Activated T-helper 1 cell treated with anti-CD3 and anti-CD28 coated beads, Interleukin-12 subunit alpha, Interleukin-12 subunit beta, Interleukin-2, Interleukin-4 antibody, amounts not matched to agents 30 ng/mL and 10 ng/mL and 1 ng/mL, durations not matched to agents 14 hours and 24 hours and 36 hours (primary cell): ENCODE measurements at regions of chr13 and their contacts with region 1.

Region 1: GRCh38 chr13:91785431-91786119 is 387.2 kb downstream of the GPC5 start:
- DNase-seq: no peak
- H3K4me3 Mint-ChIP-seq: no peak overlapping the region
- H3K27ac Mint-ChIP-seq: no peak overlapping the region
- H3K4me1 Mint-ChIP-seq: no peaks in the 10 kb centered on the region
- H3K27me3 Mint-ChIP-seq: no peaks in the 10 kb centered on the region

Region 2: DNA sequence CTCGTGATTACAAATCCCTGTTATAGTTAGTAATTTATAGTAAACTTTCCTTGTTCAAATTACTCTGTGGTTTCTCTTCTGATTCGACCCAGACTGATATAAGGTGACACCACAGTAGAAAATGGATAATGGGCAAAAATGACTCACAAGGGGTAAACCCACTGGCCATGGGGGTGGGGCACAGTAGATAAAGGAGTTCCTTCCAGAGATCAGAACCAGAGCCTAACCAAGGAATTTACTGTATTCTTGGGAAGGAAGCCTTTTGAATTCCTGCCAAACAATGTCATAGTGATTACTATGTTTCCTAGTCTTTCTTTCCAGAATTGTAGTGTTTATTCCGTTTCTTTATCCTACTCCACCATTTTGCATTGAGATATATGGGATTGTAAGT is 416.1 kb before region 1 on chr13:
- intact Hi-C with region 1: no loop called
- DNase-seq: no peak
- H3K4me3 Mint-ChIP-seq: no peak overlapping the region
- H3K27ac Mint-ChIP-seq: no peak overlapping the region
- H3K4me1 Mint-ChIP-seq: peaks cover 28% of the 10 kb centered on the region
- H3K27me3 Mint-ChIP-seq: peaks cover 5% of the 10 kb centered on the region

Region 3: DNA sequence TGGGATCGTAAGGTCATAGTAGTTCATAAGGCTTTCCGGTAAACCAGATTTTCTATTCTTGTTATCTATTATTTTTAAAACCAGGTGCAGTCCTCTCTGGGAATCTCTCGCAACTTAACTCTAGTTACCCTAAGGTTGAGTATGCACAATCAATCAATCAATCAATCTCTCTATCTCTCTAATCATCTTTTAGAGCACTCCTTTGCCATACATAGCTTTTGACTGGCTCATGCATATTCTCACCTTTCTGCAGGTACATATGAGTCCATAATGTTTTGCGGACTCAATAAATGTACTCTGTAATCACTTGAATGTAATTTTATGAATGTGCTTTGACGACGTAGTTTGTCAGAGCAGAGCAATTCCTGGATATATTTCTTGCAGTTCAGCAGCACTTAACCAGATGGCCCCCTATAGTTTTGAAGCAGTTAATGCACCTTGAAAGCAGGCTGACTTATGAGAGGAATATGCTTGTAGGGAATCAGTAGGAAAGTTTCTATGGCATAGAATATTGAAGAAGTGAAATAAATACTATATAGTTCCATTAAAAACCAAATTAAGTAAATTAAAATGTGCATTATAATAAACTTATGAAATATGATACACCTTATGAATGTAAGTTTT is 137.5 kb after region 1 on chr13:
- intact Hi-C with region 1: loop called (anchors 5 kb)
- DNase-seq: no peak
- H3K4me3 Mint-ChIP-seq: no peak overlapping the region
- H3K27ac Mint-ChIP-seq: no peak overlapping the region
- H3K4me1 Mint-ChIP-seq: no peaks in the 10 kb centered on the region
- H3K27me3 Mint-ChIP-seq: no peaks in the 10 kb centered on the region